BJ (cell line): ENCODE measurements at regions of chr16 and their contacts with region 1.

Region 1: GRCh38 chr16:70454222-70455034 is at the start of gene FCSK:
- DNase-seq: no peak
- H3K4me3 ChIP-seq: peak within 1 kb of the TSS; percentile 71
- H3K27me3 ChIP-seq: no peaks in the 10 kb centered on the region
- CTCF ChIP-seq: no peak
- polyA plus RNA-seq, gene FCSK: 4.7 and 9.0 TPM in 2 replicates

Region 2: DNA sequence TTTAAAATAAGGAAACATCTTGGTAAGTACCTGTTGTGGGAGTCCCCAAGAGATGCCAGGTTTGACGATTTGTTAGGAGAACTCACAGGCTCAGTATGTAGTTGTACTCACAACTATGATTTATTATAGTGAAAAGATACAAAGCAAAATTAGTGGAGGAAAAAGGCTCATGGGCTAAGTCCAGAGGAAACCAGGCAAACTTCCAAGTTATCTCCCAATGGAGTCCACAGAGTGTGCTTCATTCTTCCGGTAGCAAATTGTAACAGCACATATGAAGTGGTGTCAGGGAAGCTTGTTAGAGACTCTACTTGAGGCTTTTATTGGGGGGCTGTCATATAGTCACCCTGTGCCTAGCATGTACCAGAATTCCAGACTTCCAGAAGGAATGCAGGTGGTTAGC is 105.4 kb before region 1 on chr16:
- CTCF ChIA-PET with region 1: no interaction called
- POLR2A ChIA-PET with region 1: interaction called, 19 read pairs
- DNase-seq: no peak
- H3K4me3 ChIP-seq: no peak overlapping the region
- H3K27me3 ChIP-seq: no peaks in the 10 kb centered on the region
- CTCF ChIP-seq: no peak

Region 3: GRCh38 chr16:70661918-70662641 is 207.7 kb after region 1 on chr16:
- CTCF ChIA-PET with region 1: no interaction called
- POLR2A ChIA-PET with region 1: no interaction called
- DNase-seq: no peak
- H3K4me3 ChIP-seq: no peak overlapping the region
- H3K27me3 ChIP-seq: no peaks in the 10 kb centered on the region
- CTCF ChIP-seq: no peak

Region 4: GRCh38 chr16:71658771-71659170 is 1204.3 kb after region 1 on chr16:
- CTCF ChIA-PET with region 1: no interaction called
- POLR2A ChIA-PET with region 1: interaction called, 15 read pairs
- DNase-seq: no peak
- H3K4me3 ChIP-seq: no peak overlapping the region
- H3K27me3 ChIP-seq: no peaks in the 10 kb centered on the region
- CTCF ChIP-seq: no peak